ENCODE measurements at regions of chr22 and their contacts with region 1.

Region 1: GRCh38 chr22:41746567-41747400 is 47.5 kb downstream of the MEI1 start:
- DNase-seq: peak; percentile 75 to 88
- H3K4me3 ChIP-seq: no peak overlapping the region
- H3K27ac ChIP-seq: no peak overlapping the region
- H3K4me1 ChIP-seq: no peaks in the 10 kb centered on the region
- H3K27me3 ChIP-seq: no peaks in the 10 kb centered on the region
- CTCF ChIP-seq: peak; percentile 91

Region 2: DNA sequence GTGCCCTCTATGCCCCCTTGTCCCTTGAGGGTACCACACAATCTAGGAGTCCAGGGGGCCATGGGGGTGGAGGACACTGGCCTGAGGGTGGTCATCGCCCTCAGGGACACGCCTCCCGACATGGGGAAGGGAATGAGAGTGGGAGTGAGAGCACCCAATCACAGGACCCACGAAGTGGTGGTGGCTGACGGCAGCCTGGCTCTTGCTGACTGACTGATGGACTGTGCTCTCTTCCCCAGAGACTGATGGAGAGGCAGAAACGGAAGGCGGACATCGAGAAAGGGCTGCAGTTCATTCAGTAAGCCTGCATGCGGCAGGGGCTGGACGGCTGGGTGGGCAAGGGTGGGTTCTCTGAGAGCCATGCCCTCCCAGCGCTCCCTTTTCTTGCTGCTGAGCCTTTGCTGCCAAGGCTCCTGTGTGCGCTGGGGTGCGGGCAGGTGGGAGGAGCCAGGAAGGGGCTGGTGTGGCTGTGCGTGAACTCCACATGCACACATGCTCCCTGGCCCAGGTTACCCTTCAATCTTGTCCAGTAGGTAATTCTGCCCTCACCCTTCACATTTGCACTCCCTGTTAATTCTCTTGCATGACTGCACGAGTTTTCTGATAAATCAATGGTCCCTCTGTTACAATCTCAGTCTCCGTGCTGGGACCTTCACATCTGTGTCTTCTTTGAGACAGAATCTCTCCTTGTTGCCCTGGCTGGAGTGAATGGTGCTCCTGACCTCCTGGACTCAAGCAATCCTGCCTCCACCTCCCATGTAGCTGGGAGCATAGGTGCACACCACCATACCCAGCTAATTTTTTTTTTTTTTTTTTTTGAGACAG is 426.2 kb before region 1 on chr22:
- CTCF ChIA-PET with region 1: interaction called, 10 read pairs
- POLR2A ChIA-PET with region 1: no interaction called
- intact Hi-C with region 1: no loop called
- DNase-seq: no peak
- H3K4me3 ChIP-seq: no peak overlapping the region
- H3K27ac ChIP-seq: no peak overlapping the region
- H3K4me1 ChIP-seq: no peaks in the 10 kb centered on the region
- H3K27me3 ChIP-seq: no peaks in the 10 kb centered on the region
- CTCF ChIP-seq: no peak

Region 3: GRCh38 chr22:41697126-41697775 is 49.5 kb before region 1 on chr22:
- CTCF ChIA-PET with region 1: interaction called, 12 read pairs
- POLR2A ChIA-PET with region 1: no interaction called
- intact Hi-C with region 1: no loop called
- DNase-seq: peak; percentile 70 to 92
- H3K4me3 ChIP-seq: peak overlapping the region; percentile 43; the same call in 1 of the 2 replicates
- H3K27ac ChIP-seq: no peak overlapping the region
- H3K4me1 ChIP-seq: peaks cover 6% of the 10 kb centered on the region; the same call in 1 of the 2 replicates
- H3K27me3 ChIP-seq: no peaks in the 10 kb centered on the region
- CTCF ChIP-seq: peak; percentile 100

Region 4: GRCh38 chr22:41800348-41801146 is 53.8 kb after region 1 on chr22 and contains the start of gene CCDC134:
- CTCF ChIA-PET with region 1: interaction called, 16 read pairs
- POLR2A ChIA-PET with region 1: interaction called, 9 read pairs
- intact Hi-C with region 1: loop called (anchors 2 kb)
- DNase-seq: peak; percentile 78 to 96
- H3K4me3 ChIP-seq: peak within 1 kb of the TSS; percentile 71
- H3K27ac ChIP-seq: peak within 1 kb of the TSS; percentile 46
- H3K4me1 ChIP-seq: peaks cover 27% of the 10 kb centered on the region
- H3K27me3 ChIP-seq: no peaks in the 10 kb centered on the region
- CTCF ChIP-seq: no peak
- total RNA-seq, gene CCDC134: 29.0 and 33.3 TPM in 2 replicates

Region 5: DNA sequence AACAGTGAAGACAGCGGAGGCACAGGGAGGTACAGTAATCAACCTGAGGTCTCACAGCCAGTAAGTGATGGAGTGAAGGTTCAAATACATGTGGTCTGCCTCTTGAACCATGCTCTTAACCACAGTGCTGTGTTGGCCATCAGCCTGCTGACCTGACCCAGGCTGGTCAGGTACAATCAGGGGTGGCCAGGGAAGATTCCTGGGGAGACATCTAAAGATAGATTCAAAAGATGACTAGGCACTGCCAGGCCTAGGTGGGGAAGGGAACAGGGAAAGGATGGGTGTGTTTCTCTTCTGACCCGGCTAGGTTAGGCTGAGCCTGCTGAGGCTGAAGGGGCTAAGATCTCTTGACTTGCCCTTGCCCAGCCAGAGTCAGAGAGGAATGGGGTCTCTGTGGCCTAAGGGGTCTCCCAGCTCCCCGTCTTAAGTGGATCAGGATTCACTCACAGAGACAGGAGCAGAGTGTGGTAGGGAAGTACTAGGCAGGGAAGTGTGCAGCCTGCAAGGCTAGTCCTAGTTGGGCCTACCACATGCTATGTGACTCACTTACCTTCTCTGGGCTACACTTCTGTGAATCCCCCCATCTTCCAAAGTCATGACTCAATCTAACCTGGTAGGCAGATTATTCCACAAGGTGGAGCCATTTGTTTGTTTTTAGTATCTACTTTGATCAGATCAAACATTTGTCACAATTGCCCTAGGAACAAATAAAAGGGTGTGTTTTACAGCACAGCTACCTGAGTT is 75.7 kb after region 1 on chr22:
- CTCF ChIA-PET with region 1: interaction called, 8 read pairs
- POLR2A ChIA-PET with region 1: no interaction called
- intact Hi-C with region 1: loop called (anchors 1 kb)
- DNase-seq: peak in 1 of 2 experiments; percentile 90
- H3K4me3 ChIP-seq: no peak overlapping the region
- H3K27ac ChIP-seq: no peak overlapping the region
- H3K4me1 ChIP-seq: peaks cover 9% of the 10 kb centered on the region
- H3K27me3 ChIP-seq: no peaks in the 10 kb centered on the region
- CTCF ChIP-seq: peak; percentile 90

Region 6: DNA sequence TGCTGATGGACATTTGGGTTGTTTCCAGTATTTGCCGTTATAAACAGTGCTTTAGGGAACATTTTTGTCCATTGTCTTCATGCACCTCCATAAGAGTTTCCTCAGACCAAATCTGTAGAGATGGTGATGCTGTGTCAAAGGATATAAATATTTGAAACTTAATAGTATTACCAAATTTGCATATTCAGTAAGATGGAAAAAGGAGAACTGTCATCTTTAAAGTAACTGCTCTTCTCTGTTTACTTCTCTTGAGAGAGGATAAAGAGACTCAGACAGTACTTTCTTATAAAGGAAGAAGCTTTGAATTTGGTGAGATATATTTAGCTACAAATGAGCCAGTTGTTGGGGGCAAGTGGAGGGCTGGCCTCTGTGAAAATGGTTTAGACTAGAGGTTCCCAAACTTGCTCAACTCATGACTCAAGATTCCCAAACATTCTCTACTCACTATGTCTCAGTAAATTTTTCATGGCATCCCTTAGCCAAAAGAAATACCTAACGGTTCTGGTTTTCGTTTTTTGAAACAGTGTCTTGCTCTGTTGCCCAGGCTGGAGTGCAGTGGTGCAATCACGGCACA is 141.9 kb after region 1 on chr22:
- CTCF ChIA-PET with region 1: no interaction called
- POLR2A ChIA-PET with region 1: no interaction called
- intact Hi-C with region 1: no loop called
- DNase-seq: no peak
- H3K4me3 ChIP-seq: no peak overlapping the region
- H3K27ac ChIP-seq: no peak overlapping the region
- H3K4me1 ChIP-seq: no peaks in the 10 kb centered on the region
- H3K27me3 ChIP-seq: no peaks in the 10 kb centered on the region
- CTCF ChIP-seq: no peak

Region 7: GRCh38 chr22:43080616-43081015 is 1333.8 kb after region 1 on chr22:
- CTCF ChIA-PET with region 1: interaction called, 13 read pairs
- POLR2A ChIA-PET with region 1: no interaction called
- intact Hi-C with region 1: no loop called
- DNase-seq: peak; percentile 31 to 80
- H3K4me3 ChIP-seq: no peak overlapping the region
- H3K27ac ChIP-seq: no peak overlapping the region
- H3K4me1 ChIP-seq: peaks cover 7% of the 10 kb centered on the region
- H3K27me3 ChIP-seq: no peaks in the 10 kb centered on the region
- CTCF ChIP-seq: no peak